GM12878 (cell line): ENCODE measurements at regions of chr22 and their contacts with region 1.

Region 1: GRCh38 chr22:23800297-23801237 is 13.8 kb downstream of the SMARCB1 start:
- DNase-seq: peak; percentile 87
- ATAC-seq: peak; percentile 70
- H3K4me3 ChIP-seq: no peak overlapping the region
- H3K27ac ChIP-seq: peak overlapping the region; percentile 89
- H3K4me1 ChIP-seq: peaks cover 76% of the 10 kb centered on the region
- H3K27me3 ChIP-seq: no peaks in the 10 kb centered on the region
- CTCF ChIP-seq: no peak
- EP300 ChIP-seq: peak in 1 of 2 experiments; percentile 74; a peak in 2 of 4 replicates
- POLR2A ChIP-seq: no peak
- RAD21 ChIP-seq: no peak

Region 2: GRCh38 chr22:23500508-23501260 is 299.9 kb before region 1 on chr22:
- CTCF ChIA-PET with region 1: no interaction called
- POLR2A ChIA-PET with region 1: no interaction called
- RAD21 ChIA-PET with region 1: no interaction called
- SMC1A ChIA-PET with region 1: no interaction called
- in situ Hi-C with region 1: no loop called
- intact Hi-C with region 1: no loop called
- DNase-seq: no peak
- ATAC-seq: no peak
- H3K4me3 ChIP-seq: no peak overlapping the region
- H3K27ac ChIP-seq: no peak overlapping the region
- H3K4me1 ChIP-seq: no peaks in the 10 kb centered on the region
- H3K27me3 ChIP-seq: no peaks in the 10 kb centered on the region; a peak in 1 of 4 replicates
- CTCF ChIP-seq: no peak
- EP300 ChIP-seq: no peak
- POLR2A ChIP-seq: no peak
- RAD21 ChIP-seq: no peak

Region 3: DNA sequence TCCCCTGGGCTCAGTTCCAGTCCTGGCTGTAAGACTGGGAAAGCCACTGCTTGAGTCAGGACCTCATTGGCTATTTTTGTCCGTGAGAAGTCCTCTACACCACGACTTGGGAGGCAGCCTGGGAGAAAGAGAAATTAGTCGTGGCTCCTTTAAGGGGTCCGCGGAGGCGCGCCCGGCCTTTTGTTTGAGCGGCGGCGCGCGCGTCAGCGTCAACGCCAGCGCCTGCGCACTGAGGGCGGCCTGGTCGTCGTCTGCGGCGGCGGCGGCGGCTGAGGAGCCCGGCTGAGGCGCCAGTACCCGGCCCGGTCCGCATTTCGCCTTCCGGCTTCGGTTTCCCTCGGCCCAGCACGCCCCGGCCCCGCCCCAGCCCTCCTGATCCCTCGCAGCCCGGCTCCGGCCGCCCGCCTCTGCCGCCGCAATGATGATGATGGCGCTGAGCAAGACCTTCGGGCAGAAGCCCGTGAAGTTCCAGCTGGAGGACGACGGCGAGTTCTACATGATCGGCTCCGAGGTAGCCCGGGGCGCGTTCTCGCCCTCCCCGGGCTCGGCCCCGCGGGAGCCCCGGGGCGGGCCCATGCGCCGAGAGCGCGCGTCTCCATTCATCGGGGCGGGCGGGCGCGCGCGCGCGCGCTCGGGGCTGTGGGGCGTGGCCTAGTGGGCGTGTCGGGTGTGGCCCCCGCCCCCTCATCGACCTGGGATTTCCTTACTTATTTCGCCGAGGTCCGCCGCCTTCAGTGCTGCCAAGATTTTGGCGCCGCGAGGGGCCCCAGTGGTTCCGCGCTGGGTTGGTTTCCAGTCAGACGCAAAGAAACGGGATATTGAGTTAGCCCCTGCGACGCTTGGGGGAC is 13.6 kb before region 1 on chr22 and contains the start of gene SMARCB1:
- CTCF ChIA-PET with region 1: interaction called, 11 read pairs
- POLR2A ChIA-PET with region 1: interaction called, 14 read pairs
- RAD21 ChIA-PET with region 1: interaction called, 3 read pairs
- SMC1A ChIA-PET with region 1: interaction called, 13 read pairs
- in situ Hi-C with region 1: no loop called
- intact Hi-C with region 1: loop called (anchors 2 kb)
- DNase-seq: no peak
- ATAC-seq: peak; percentile 82
- H3K4me3 ChIP-seq: peak within 1 kb of the TSS; percentile 73
- H3K27ac ChIP-seq: peak within 1 kb of the TSS; percentile 98
- H3K4me1 ChIP-seq: peaks cover 11% of the 10 kb centered on the region
- H3K27me3 ChIP-seq: no peaks in the 10 kb centered on the region
- CTCF ChIP-seq: peak in 1 of 3 experiments; percentile 22; a peak in 2 of 6 replicates
- EP300 ChIP-seq: no peak
- POLR2A ChIP-seq: peak; percentile 85
- RAD21 ChIP-seq: no peak
- polyA plus RNA-seq, gene SMARCB1: 9.1 to 17.9 TPM

Region 4: DNA sequence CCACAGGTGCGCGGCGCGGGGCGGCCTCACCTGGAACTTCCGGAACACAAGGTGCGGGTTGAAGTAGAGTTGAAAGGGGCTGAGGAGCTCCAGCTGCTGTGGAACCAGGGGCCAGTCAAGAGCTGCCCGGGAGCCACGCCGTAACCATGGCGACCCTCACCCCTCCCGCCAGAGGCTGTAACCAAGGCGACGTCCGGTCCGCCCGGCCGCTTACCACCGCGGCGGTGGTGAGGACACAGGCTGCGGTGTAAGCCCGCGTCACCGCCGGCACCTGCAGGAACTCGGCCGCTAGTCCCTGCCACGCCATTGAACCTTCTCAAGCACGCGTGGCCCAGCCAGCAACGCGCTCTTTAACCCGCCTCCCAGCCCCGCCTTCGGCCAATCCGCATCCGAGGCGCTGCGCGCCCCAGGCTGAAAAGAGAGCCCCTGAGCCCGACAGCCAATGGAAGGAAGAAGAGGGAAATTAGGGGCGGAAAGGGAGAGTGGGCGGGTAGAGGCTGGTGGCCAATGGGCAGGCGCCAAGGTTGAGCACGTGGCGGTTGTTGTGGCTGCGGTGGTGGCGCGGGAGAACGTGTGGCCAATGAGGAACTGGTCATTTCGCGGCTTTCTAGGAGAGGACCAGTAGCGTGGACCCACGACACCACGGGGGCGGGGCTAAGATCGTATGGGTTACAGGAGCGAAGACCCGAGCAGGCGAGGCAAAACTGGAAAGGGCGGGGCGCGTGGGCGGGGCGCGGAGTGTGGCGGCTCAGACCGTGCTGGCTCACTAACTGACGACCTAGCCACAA is 38.3 kb after region 1 on chr22 and contains the start of gene DERL3:
- CTCF ChIA-PET with region 1: interaction called, 5 read pairs
- POLR2A ChIA-PET with region 1: interaction called, 12 read pairs
- RAD21 ChIA-PET with region 1: interaction called, 9 read pairs
- SMC1A ChIA-PET with region 1: interaction called, 4 read pairs
- in situ Hi-C with region 1: no loop called
- intact Hi-C with region 1: loop called (anchors 2 kb)
- DNase-seq: peak; percentile 98
- ATAC-seq: peak; percentile 95
- H3K4me3 ChIP-seq: peak within 1 kb of the TSS; percentile 76
- H3K27ac ChIP-seq: peak within 1 kb of the TSS; percentile 56
- H3K4me1 ChIP-seq: peaks cover 25% of the 10 kb centered on the region
- H3K27me3 ChIP-seq: no peaks in the 10 kb centered on the region
- CTCF ChIP-seq: no peak
- EP300 ChIP-seq: no peak; a peak in 1 of 4 replicates
- POLR2A ChIP-seq: peak; percentile 70
- RAD21 ChIP-seq: no peak
- polyA plus RNA-seq, gene DERL3: 4.1 to 6.4 TPM